ENCODE measurements at regions of chr1 and their contacts with region 1.

Region 1: DNA sequence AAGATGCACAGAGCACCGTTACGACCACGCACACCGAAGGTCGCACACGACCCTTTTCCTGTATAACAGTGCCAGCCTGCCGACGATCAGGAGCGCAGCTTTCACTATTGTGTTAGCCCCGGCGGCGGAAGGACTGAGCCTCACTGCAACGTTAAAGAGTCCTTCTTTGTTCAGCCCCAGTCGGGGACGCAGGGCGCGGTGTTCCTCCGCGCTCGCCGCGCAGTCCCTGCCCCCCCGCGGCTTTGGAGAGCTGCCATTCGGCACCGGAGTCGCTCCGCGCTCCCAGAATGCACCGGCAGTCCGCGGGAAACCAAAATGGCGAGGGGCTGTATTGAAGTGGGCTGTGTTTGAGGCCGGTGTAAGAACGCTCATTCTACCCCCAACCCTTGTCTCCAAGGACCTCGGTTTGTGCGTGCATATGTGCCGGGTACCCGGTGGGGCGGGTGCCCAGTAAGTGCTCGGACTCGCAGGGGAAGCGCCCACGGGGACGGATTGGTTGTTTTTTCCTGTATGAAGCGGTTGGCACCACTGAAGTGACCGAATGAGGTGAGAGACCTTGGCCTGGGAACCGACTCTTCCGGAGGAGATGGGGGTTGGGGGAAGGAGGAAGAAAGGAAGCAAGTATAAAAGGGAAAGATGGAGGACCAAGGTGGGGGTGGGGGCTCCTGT is at the start of gene MTF2:
- DNase-seq: peak; percentile 89 to 98 (median 90)
- ATAC-seq: peak; percentile 90
- H3K4me3 ChIP-seq: peak within 1 kb of the TSS; percentile 92
- H3K27ac ChIP-seq: peak within 1 kb of the TSS; percentile 96
- H3K4me1 ChIP-seq: peaks cover 0 to 6% of the 10 kb centered on the region in 2 experiments; a peak in 3 of 5 replicates
- H3K27me3 ChIP-seq: no peaks in the 10 kb centered on the region
- CTCF ChIP-seq: no peak
- EP300 ChIP-seq: peak; percentile 66
- POLR2A ChIP-seq: peak; percentile 98
- RAD21 ChIP-seq: peak; percentile 7 to 12; a peak in 2 of 4 replicates
- polyA plus RNA-seq, gene MTF2: 29.3 to 35.7 TPM

Region 2: GRCh38 chr1:93093332-93094006 is 14.3 kb after region 1 on chr1:
- CTCF ChIA-PET with region 1: no interaction called
- POLR2A ChIA-PET with region 1: interaction called, 71 read pairs
- in situ Hi-C with region 1: no loop called
- intact Hi-C with region 1: no loop called
- DNase-seq: no peak
- ATAC-seq: peak; percentile 67
- H3K4me3 ChIP-seq: no peak overlapping the region
- H3K27ac ChIP-seq: no peak overlapping the region
- H3K4me1 ChIP-seq: no peaks in the 10 kb centered on the region
- H3K27me3 ChIP-seq: no peaks in the 10 kb centered on the region
- CTCF ChIP-seq: no peak
- EP300 ChIP-seq: no peak
- POLR2A ChIP-seq: no peak
- RAD21 ChIP-seq: no peak

Region 3: DNA sequence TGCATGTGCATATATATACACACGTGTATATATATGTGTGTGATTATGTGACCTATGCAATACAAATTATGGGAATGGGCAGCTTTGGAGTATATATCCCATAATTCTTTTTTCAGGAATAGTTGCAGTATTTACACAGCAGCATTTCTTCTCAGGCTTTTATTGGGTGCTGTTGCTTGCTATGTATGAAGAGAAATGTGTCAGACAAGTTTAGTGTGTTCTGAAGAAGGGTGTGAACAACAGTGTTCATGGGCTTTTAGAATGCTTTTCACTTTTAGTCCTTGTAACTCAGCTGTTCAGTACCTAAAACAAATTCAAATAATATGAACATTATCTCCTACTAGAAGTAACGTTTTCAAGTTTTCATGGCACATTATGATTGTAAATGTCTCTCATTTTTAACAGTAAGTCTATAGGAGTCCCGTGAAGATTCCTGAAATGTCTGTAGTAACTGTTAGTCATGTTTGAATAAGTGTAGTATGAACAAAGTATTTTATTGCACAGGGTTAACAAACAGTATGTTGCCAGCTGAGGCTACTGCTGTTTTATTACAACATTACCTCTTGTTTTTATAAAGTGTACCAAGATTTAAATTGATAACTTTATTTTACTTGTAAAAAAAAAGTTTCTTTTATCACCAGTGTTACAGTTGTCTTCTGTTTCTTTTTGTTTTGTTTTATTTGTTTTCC is 58.6 kb after region 1 on chr1:
- CTCF ChIA-PET with region 1: no interaction called
- POLR2A ChIA-PET with region 1: interaction called, 3 read pairs
- in situ Hi-C with region 1: no loop called
- intact Hi-C with region 1: loop called (anchors 5 kb)
- DNase-seq: no peak
- ATAC-seq: no peak
- H3K4me3 ChIP-seq: no peak overlapping the region
- H3K27ac ChIP-seq: no peak overlapping the region
- H3K4me1 ChIP-seq: no peaks in the 10 kb centered on the region
- H3K27me3 ChIP-seq: no peaks in the 10 kb centered on the region
- CTCF ChIP-seq: no peak
- EP300 ChIP-seq: no peak
- POLR2A ChIP-seq: no peak
- RAD21 ChIP-seq: no peak

Region 4: GRCh38 chr1:93179886-93180722 is 101.0 kb after region 1 on chr1 and contains the start of gene TMED5:
- CTCF ChIA-PET with region 1: no interaction called
- POLR2A ChIA-PET with region 1: interaction called, 5 read pairs
- in situ Hi-C with region 1: no loop called
- intact Hi-C with region 1: loop called (anchors 2 kb)
- DNase-seq: peak; percentile 87 to 98 (median 90)
- ATAC-seq: peak; percentile 92
- H3K4me3 ChIP-seq: peak within 1 kb of the TSS; percentile 70
- H3K27ac ChIP-seq: peak within 1 kb of the TSS; percentile 97
- H3K4me1 ChIP-seq: peaks cover 11 to 14% of the 10 kb centered on the region in 2 experiments; a peak in 2 of 5 replicates
- H3K27me3 ChIP-seq: no peaks in the 10 kb centered on the region
- CTCF ChIP-seq: 0 out of 6 replicates have a peak, but pooled peaks of 1 of the 3 experiments have one; percentile 23
- EP300 ChIP-seq: peak; percentile 51
- POLR2A ChIP-seq: peak; percentile 86
- RAD21 ChIP-seq: no peak
- polyA plus RNA-seq, gene TMED5: 28.7 to 43.9 TPM

Region 5: DNA sequence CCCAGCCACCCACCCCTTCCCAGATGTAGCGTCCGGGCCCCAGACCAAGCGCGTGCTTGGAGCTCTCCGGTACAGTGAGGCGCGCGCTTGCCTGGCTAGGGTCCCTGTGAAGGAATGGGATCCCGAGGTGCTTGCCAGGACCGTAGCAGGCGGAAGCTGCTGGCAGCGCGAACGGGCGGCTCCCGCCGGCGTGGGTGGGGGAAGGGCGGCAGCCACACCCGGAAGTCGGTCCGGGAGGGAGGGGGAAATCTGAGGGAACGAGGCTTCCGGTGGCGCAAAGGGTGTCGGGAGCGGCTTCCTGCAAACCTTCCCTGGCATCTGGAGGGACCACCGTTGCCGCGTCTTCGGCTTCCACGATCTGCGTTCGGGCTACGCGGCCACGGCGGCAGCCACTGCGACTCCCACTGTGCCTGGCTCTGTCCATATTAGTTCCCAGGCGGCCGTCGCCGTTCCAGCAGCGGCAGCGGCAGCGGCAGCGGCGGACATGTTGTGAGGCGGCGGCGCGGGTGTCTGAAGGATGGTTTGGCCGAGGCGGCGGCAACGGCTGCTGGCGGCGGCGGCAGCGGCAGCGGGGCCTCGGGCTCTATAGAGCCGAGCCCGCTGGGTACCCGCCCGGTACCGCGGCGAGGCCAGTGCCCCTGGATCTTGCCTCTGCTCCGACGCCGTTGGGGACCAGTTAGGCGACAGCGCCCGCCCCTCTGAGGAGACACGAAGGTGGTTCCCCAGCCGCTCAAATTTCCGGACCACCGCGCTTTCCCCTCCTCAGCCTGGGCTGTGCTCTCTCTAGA is 266.7 kb after region 1 on chr1 and contains the start of gene DR1:
- CTCF ChIA-PET with region 1: no interaction called
- POLR2A ChIA-PET with region 1: interaction called, 8 read pairs
- in situ Hi-C with region 1: no loop called
- intact Hi-C with region 1: loop called (anchors 5 kb)
- DNase-seq: peak; percentile 91 to 94 (median 94)
- ATAC-seq: peak; percentile 70
- H3K4me3 ChIP-seq: peak within 1 kb of the TSS; percentile 91
- H3K27ac ChIP-seq: peak within 1 kb of the TSS; percentile 99
- H3K4me1 ChIP-seq: peaks cover 0 to 4% of the 10 kb centered on the region in 2 experiments; a peak in 3 of 5 replicates
- H3K27me3 ChIP-seq: no peaks in the 10 kb centered on the region
- CTCF ChIP-seq: no peak
- EP300 ChIP-seq: peak; percentile 62
- POLR2A ChIP-seq: peak; percentile 98
- RAD21 ChIP-seq: no peak
- polyA plus RNA-seq, gene DR1: 8.1 to 9.3 TPM